GM12878 (cell line): ENCODE measurements at regions of chr7 and their contacts with region 1.

Region 1: GRCh38 chr7:40329601-40330153 is 194.9 kb downstream of the SUGCT start:
- DNase-seq: no peak
- ATAC-seq: no peak
- H3K4me3 ChIP-seq: no peak overlapping the region
- H3K27ac ChIP-seq: no peak overlapping the region
- H3K4me1 ChIP-seq: no peaks in the 10 kb centered on the region
- H3K27me3 ChIP-seq: no peaks in the 10 kb centered on the region
- CTCF ChIP-seq: peak; percentile 52 to 62 (median 59); a peak in 5 of 6 replicates
- EP300 ChIP-seq: no peak
- POLR2A ChIP-seq: no peak
- RAD21 ChIP-seq: peak; percentile 83

Region 2: DNA sequence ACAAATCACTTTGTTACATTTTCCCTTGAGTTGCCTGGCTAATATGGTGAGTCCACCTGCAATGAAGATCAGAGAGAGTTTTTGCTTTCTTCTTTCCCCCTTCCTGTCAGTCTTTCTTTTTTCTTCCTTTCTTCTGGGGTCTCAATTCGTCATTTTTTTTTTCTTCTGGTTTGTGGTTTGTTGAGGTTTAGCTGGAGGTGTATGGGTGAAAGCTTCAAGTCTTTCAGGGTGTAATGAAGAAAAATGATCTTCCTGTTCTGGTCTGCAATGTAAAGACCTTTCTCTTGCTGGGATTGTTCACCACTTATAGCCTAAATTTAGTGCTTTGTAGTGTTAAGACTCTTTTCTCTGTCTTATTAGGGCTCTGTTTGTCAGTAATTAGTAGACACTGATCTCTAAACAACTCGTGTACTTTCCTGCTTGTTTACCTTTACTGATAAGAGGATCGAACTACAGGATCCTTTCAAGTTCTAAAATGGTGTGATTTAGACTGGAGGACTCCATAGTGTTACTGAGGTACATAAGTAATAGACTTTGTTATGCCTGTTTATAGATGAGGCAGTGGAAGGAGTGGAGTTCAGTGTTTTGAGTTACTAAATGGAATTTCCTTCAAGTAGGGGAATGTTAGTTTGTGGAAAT is 65.8 kb before region 1 on chr7:
- CTCF ChIA-PET with region 1: no interaction called
- POLR2A ChIA-PET with region 1: no interaction called
- RAD21 ChIA-PET with region 1: no interaction called
- SMC1A ChIA-PET with region 1: no interaction called
- in situ Hi-C with region 1: no loop called
- intact Hi-C with region 1: no loop called
- DNase-seq: no peak
- ATAC-seq: no peak
- H3K4me3 ChIP-seq: no peak overlapping the region
- H3K27ac ChIP-seq: no peak overlapping the region
- H3K4me1 ChIP-seq: no peaks in the 10 kb centered on the region
- H3K27me3 ChIP-seq: no peaks in the 10 kb centered on the region
- CTCF ChIP-seq: no peak
- EP300 ChIP-seq: no peak
- POLR2A ChIP-seq: no peak
- RAD21 ChIP-seq: no peak

Region 3: DNA sequence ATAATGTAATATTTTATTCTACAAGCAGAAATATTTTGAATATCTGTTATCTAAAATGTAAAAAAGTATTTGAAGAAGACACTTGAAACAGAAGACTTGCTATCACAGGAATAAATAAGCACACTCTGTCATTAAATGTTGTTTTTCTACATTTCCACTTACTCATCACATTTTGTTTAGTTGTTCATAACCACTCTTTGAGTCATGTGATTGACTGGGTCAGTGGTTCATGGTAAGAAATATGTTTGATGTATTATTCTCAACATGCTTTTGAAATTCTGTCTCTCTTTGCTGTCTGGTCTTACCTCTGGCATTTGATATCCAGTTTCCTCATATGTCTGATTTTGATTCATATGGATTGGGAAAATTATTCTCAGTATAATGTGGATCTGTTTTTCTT is 23.1 kb before region 1 on chr7:
- CTCF ChIA-PET with region 1: no interaction called
- POLR2A ChIA-PET with region 1: no interaction called
- RAD21 ChIA-PET with region 1: no interaction called
- SMC1A ChIA-PET with region 1: no interaction called
- in situ Hi-C with region 1: no loop called
- intact Hi-C with region 1: no loop called
- DNase-seq: no peak
- ATAC-seq: no peak
- H3K4me3 ChIP-seq: no peak overlapping the region
- H3K27ac ChIP-seq: no peak overlapping the region
- H3K4me1 ChIP-seq: 0 out of 2 replicates have a peak, but pooled peaks cover 4% of the 10 kb centered on the region
- H3K27me3 ChIP-seq: no peaks in the 10 kb centered on the region
- CTCF ChIP-seq: no peak
- EP300 ChIP-seq: no peak
- POLR2A ChIP-seq: no peak
- RAD21 ChIP-seq: no peak

Region 4: GRCh38 chr7:40604601-40605438 is 275.1 kb after region 1 on chr7:
- CTCF ChIA-PET with region 1: interaction called, 5 read pairs
- POLR2A ChIA-PET with region 1: no interaction called
- RAD21 ChIA-PET with region 1: no interaction called
- SMC1A ChIA-PET with region 1: no interaction called
- in situ Hi-C with region 1: no loop called
- intact Hi-C with region 1: loop called (anchors 2 kb)
- DNase-seq: no peak
- ATAC-seq: peak; percentile 99
- H3K4me3 ChIP-seq: no peak overlapping the region
- H3K27ac ChIP-seq: no peak overlapping the region
- H3K4me1 ChIP-seq: no peaks in the 10 kb centered on the region
- H3K27me3 ChIP-seq: no peaks in the 10 kb centered on the region
- CTCF ChIP-seq: peak; percentile 62 to 77 (median 74)
- EP300 ChIP-seq: no peak
- POLR2A ChIP-seq: no peak
- RAD21 ChIP-seq: peak; percentile 63